ENCODE measurements at regions of chr7 and their contacts with region 1.

Region 1: GRCh38 chr7:94449148-94449725 is 54.5 kb downstream of the COL1A2 start:
- DNase-seq: peak; percentile 78

Region 2: DNA sequence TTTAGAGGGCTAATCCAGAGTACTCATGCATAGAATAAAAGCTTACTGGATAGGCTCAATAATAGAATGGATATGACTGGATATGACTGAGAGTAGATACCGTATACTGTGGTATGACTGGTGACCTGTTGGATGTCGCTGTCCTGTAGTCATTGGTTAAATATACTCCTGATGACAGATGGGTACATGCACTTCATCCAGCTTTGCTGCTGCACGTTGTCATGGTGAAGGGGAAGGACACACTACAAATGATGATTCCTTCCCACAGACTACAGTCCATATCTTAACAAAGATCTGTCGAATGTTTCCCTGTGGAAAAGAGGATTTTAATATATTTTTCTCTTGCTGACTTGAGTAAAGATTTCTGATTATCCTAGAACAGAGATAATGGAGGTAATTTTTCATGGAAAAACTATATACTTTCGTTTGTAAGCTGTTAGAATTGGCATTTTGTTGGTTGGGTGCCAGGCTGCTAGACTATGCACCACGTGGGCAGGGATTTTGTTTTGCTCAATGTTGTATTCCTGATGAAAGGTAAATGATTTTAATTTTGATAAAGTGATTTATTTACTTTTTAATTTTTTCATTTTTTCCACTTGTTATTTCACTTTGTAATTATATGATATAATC is 555.5 kb after region 1 on chr7:
- in situ Hi-C with region 1: loop called (anchors 10 kb)
- DNase-seq: no peak

Measured in SK-MEL-5 (cell line).